ENCODE measurements at regions of chr6 and their contacts with region 1.

Region 1: DNA sequence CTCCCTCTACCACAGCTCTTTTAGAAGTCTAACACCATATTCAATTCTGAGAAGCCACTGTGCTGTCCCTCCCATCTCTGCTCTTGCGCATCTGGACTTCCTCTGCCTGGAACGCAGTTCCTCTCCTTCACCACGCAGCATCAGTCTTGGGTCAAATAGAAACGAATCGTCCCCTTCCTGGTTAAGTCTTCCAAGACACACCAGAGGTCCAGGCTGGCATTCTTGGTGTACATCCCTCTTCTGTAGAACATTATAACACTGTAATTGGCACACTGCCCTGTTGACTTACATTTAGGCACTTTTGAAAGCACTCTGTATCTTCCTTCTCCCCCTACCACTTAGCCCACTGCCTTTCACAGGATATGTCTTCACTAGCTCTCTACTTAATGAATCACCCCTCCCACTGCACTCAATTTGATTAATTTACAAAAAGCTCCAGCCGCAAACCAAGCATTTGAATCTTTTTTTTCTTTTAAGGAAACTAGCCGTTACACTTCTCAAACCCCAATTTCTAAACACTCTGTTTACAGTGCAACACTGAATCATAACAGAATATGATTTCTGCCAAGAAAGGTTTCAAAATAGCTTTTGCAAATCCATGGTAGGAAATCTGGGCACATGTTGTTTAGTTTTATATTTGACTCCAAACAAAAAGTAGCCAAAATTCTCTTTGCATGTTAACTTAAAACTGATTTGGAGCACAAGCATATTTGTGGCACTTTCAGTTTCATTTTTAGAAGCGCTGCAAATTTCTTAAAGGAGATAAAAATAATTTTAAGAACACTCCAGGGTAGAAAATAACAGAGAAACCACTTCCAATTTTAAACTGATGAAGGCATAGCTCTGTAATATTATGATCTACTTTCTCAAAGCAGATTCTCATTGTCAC is 140.7 kb upstream of the CARMIL1 start:
- DNase-seq: peak; percentile 84
- H3K4me3 ChIP-seq: peak overlapping the region; percentile 29 to 54 (median 48)
- H3K27ac ChIP-seq: peak overlapping the region; percentile 81 to 91 (median 84)
- H3K4me1 ChIP-seq: peaks cover 0 to 42% (median 32%) of the 10 kb centered on the region in 4 donors
- H3K27me3 ChIP-seq: no peaks in the 10 kb centered on the region
- CTCF ChIP-seq: peak in 1 of 4 experiments; percentile 32
- EP300 ChIP-seq: no peak
- POLR2A ChIP-seq: peak in 1 of 2 donors; percentile 56

Region 2: DNA sequence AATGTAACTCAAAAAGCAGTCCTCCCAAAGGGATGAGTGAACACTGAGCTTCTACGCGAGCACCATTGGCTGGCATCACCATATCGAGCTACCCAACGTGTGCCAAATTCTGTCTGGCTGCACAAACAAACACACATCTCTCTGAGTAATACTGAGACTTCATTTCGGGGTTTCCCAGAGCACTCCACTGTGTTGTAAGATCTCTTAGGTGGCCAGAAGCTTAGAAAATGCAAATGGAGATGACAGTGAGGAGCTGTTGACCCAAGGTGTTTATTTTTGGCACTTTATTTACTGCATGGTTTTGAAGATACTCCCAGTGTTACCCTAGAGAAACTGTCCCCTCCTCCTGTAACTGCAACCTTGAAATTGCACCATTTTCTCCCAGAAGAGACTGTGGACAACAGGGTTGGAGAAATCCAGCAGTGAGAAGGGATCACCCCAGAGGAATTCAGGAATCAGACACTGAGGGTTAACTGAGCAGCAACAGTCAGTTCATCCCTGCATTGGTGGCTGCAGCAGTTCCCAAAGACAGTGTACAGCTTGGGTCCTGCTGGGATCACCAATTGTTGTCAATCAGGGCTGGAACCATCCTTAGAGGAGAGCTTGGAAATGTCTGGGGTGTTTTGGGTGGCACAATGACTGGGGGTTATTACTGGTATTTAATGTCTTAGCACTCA is 201.7 kb before region 1 on chr6:
- intact Hi-C with region 1: no loop called
- DNase-seq: no peak
- H3K4me3 ChIP-seq: no peak overlapping the region
- H3K27ac ChIP-seq: no peak overlapping the region
- H3K4me1 ChIP-seq: peaks cover 0 to 11% (median 4%) of the 10 kb centered on the region in 4 donors
- H3K27me3 ChIP-seq: no peaks in the 10 kb centered on the region
- CTCF ChIP-seq: no peak
- EP300 ChIP-seq: no peak
- POLR2A ChIP-seq: no peak

Region 3: DNA sequence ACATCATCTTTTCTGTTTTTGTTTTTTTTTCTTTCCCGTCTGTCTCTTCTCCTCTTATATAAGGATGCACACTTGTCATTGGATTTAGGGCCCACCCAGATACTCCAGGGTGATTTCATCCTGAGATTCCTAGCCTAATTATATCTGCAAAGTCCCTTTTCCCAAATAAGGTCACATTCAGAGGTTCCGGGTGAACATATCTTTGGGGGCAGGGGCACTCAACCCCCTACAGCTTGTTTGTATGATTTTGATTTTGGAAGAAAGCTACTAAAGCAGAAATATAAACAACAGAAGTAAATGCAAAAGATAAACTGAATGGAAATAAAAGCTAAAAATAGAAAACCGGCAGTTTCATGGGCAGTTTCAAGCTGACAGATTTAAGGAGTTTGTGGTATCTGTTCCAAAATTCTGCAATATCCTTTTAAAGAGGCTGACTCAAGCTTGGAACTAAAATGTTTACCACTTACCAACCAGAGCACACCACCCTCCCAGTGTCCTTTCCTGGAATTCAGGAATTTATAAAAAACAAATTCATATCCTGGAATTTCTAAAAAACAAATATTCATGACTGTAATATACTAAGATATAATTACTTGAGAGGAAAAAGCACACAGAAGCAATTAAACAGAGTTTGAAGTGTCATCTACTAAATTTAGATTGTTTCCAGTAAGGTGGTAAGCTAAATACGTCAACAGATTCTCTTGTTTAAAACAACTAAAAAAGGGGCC is 40.7 kb after region 1 on chr6:
- intact Hi-C with region 1: loop called (anchors 5 kb)
- DNase-seq: no peak
- H3K4me3 ChIP-seq: no peak overlapping the region
- H3K27ac ChIP-seq: peak overlapping the region; percentile 62 to 87 (median 72)
- H3K4me1 ChIP-seq: peaks cover 0 to 45% (median 29%) of the 10 kb centered on the region in 4 donors
- H3K27me3 ChIP-seq: no peaks in the 10 kb centered on the region
- CTCF ChIP-seq: no peak
- EP300 ChIP-seq: peak in 3 of 4 donors; percentile 35 to 62 (median 50)
- POLR2A ChIP-seq: no peak